SK-N-SH (cell line): ENCODE measurements at regions of chr2 and their contacts with region 1.

Region 1: GRCh38 chr2:165874445-165875039 is 79.0 kb downstream of the TTC21B start:
- DNase-seq: peak; percentile 44
- H3K4me3 ChIP-seq: no peak overlapping the region; a peak in 1 of 4 replicates
- H3K27ac ChIP-seq: no peak overlapping the region; a peak in 1 of 4 replicates
- H3K4me1 ChIP-seq: no peaks in the 10 kb centered on the region
- H3K27me3 ChIP-seq: no peaks in the 10 kb centered on the region
- CTCF ChIP-seq: peak; percentile 79
- EP300 ChIP-seq: no peak
- RAD21 ChIP-seq: peak; percentile 96

Region 2: DNA sequence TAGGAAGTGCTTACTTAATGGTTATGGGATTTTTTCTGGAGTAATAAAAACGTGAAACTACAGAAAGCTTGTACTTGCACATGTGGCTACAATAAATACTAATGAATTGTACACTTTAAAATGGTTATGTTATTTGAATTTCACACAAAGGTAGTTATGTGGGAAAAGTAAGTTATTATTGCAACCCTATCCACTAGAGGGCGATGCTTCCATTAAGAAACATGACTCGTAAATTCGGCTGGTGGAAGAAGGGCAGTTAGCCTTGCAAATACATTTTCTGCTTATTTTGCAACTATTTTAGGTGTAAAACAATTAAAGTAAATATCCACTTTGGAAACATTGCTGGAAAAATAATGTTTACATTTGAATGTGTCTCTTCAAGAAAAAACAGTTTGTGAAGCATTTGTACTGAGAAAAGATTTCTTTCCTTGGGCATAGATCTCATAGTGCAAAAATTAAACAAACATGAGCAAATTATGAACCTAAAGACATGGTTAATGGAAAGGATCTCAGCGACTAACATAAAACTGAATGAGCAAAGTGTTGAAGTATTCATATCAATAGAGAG is 473.2 kb before region 1 on chr2:
- CTCF ChIA-PET with region 1: interaction called, 53 read pairs
- POLR2A ChIA-PET with region 1: no interaction called
- DNase-seq: peak; percentile 19
- H3K4me3 ChIP-seq: no peak overlapping the region; a peak in 1 of 4 replicates
- H3K27ac ChIP-seq: no peak overlapping the region
- H3K4me1 ChIP-seq: peaks cover 8 to 26% of the 10 kb centered on the region in 2 experiments; a peak in 3 of 4 replicates
- H3K27me3 ChIP-seq: no peaks in the 10 kb centered on the region
- CTCF ChIP-seq: peak; percentile 86
- EP300 ChIP-seq: no peak
- RAD21 ChIP-seq: peak; percentile 95

Region 3: GRCh38 chr2:165698444-165698894 is 176.1 kb before region 1 on chr2:
- CTCF ChIA-PET with region 1: interaction called, 17 read pairs
- POLR2A ChIA-PET with region 1: no interaction called
- DNase-seq: peak; percentile 42
- H3K4me3 ChIP-seq: no peak overlapping the region
- H3K27ac ChIP-seq: peak overlapping the region in 1 of 2 experiments; percentile 48; a peak in 2 of 4 replicates
- H3K4me1 ChIP-seq: peaks cover 5 to 13% of the 10 kb centered on the region in 2 experiments; a peak in 3 of 4 replicates
- H3K27me3 ChIP-seq: no peaks in the 10 kb centered on the region
- CTCF ChIP-seq: peak; percentile 67
- EP300 ChIP-seq: no peak
- RAD21 ChIP-seq: peak; percentile 86

Region 4: DNA sequence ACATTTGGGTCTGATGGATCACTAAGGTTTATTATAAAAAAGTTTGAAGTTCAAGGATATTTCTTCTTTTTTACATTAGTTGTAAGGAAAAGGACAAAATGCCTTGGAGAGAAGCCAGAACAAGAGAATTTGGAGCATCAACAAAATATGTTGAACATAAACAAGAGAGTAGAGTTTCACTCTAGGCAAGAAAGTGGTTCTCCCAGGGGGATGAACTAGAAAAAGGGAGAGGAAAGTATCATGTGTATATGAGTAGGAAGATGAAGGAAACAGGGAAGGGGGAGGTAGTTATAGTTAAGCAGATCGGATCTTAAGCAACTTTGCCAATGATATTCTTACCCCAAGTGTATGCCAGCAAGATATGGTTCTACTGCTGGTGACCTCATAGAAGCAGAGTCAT is 16.7 kb before region 1 on chr2:
- CTCF ChIA-PET with region 1: interaction called, 11 read pairs
- POLR2A ChIA-PET with region 1: no interaction called
- DNase-seq: no peak
- H3K4me3 ChIP-seq: no peak overlapping the region
- H3K27ac ChIP-seq: no peak overlapping the region
- H3K4me1 ChIP-seq: no peaks in the 10 kb centered on the region
- H3K27me3 ChIP-seq: no peaks in the 10 kb centered on the region
- CTCF ChIP-seq: no peak
- EP300 ChIP-seq: no peak
- RAD21 ChIP-seq: no peak

Region 5: DNA sequence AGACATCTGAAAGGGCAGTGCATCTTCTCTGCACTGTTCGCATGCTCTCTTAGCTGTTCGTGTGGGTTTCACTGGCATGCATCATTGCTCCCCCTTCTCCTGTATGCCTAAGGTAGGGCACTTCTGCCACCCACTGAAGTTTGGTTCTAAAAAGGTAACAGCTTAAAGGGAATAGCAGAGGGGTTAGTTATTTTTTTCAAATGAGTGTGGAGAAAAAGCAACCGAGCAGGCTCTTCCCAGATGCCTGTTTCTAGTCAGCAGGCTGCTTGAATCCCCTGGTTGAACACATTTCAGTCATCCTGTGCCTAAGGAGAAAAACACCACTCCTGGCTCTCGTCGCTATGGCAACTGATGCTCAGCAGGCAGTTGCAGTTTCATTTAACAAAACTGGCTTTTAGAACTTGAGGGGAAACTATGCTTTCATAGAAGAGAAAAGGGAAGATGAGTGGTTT is 10.7 kb before region 1 on chr2:
- CTCF ChIA-PET with region 1: interaction called, 23 read pairs
- POLR2A ChIA-PET with region 1: no interaction called
- DNase-seq: peak; percentile 47
- H3K4me3 ChIP-seq: no peak overlapping the region; a peak in 1 of 4 replicates
- H3K27ac ChIP-seq: peak overlapping the region in 1 of 2 experiments; percentile 69; a peak in 2 of 4 replicates
- H3K4me1 ChIP-seq: peaks cover 0 to 13% of the 10 kb centered on the region in 2 experiments; a peak in 2 of 4 replicates
- H3K27me3 ChIP-seq: no peaks in the 10 kb centered on the region
- CTCF ChIP-seq: no peak
- EP300 ChIP-seq: no peak
- RAD21 ChIP-seq: no peak

Region 6: GRCh38 chr2:166025313-166025712 is 150.8 kb after region 1 on chr2:
- CTCF ChIA-PET with region 1: no interaction called
- POLR2A ChIA-PET with region 1: no interaction called
- DNase-seq: no peak
- H3K4me3 ChIP-seq: no peak overlapping the region
- H3K27ac ChIP-seq: no peak overlapping the region
- H3K4me1 ChIP-seq: no peaks in the 10 kb centered on the region
- H3K27me3 ChIP-seq: no peaks in the 10 kb centered on the region
- CTCF ChIP-seq: no peak
- EP300 ChIP-seq: no peak
- RAD21 ChIP-seq: no peak